ENCODE measurements at regions of chr14 and their contacts with region 1.

Region 1: GRCh38 chr14:61750708-61751474 is 11.3 kb upstream of the SNAPC1 start:
- DNase-seq: peak; percentile 89
- ATAC-seq: peak; percentile 98
- H3K4me3 Mint-ChIP-seq: peak overlapping the region; percentile 86
- H3K27ac Mint-ChIP-seq: peak overlapping the region; percentile 83
- H3K4me1 Mint-ChIP-seq: peaks cover 56% of the 10 kb centered on the region
- H3K27me3 Mint-ChIP-seq: no peaks in the 10 kb centered on the region

Region 2: DNA sequence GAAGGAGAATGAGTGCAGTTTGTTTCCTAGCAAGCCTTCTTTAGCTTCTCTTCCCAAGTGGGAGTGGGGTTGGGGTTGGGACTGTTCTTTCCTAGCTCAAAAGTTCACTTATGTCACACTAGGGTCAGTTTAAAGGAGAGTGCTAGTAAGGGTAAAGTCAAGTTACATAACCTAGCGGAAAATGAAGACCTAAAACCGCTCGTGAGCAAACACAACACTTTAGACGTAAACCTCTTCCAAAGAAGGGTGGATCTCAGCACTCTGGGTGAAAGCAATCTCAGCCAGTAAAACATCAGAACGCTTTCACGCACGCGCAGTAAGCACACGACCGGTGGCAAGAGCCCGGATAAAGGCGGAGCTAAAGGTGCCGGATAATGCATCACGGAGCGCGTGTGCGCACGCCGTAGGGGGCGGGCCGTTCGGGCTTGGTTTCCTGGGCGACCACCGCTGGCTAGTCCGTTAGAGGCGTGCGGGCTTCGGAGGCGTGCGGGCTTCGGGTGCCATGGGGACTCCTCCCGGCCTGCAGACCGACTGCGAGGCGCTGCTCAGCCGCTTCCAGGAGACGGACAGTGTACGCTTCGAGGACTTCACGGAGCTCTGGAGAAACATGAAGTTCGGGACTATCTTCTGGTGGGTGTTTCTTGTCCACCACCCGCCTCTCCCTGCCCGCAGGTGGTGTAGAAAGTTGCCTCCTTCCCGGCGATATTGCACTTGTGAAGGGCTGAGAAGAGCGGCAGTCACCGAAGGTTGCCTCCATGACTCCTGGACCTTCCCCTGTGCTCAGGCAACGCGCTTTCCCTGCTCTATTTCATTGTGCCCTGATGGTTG is 11.3 kb after region 1 on chr14 and contains the start of gene SNAPC1:
- CTCF ChIA-PET with region 1: interaction called, 33 read pairs
- POLR2A ChIA-PET with region 1: interaction called, 9 read pairs
- DNase-seq: peak; percentile 99
- ATAC-seq: peak; percentile 98
- H3K4me3 Mint-ChIP-seq: peak within 1 kb of the TSS; percentile 87
- H3K27ac Mint-ChIP-seq: peak within 1 kb of the TSS; percentile 93
- H3K4me1 Mint-ChIP-seq: peaks cover 44% of the 10 kb centered on the region
- H3K27me3 Mint-ChIP-seq: peaks cover 4% of the 10 kb centered on the region
- total RNA-seq, gene SNAPC1: 6.4 to 6.5 TPM